Mammary epithelial cell (primary cell): ENCODE measurements at regions of chr6 and their contacts with region 1.

Region 1: GRCh38 chr6:21461844-21462518 is 131.6 kb upstream of the SOX4 start:
- DNase-seq: no peak
- H3K4me3 ChIP-seq: no peak overlapping the region
- H3K27ac ChIP-seq: no peak overlapping the region
- H3K4me1 ChIP-seq: no peaks in the 10 kb centered on the region
- H3K27me3 ChIP-seq: no peaks in the 10 kb centered on the region
- CTCF ChIP-seq: no peak

Region 2: DNA sequence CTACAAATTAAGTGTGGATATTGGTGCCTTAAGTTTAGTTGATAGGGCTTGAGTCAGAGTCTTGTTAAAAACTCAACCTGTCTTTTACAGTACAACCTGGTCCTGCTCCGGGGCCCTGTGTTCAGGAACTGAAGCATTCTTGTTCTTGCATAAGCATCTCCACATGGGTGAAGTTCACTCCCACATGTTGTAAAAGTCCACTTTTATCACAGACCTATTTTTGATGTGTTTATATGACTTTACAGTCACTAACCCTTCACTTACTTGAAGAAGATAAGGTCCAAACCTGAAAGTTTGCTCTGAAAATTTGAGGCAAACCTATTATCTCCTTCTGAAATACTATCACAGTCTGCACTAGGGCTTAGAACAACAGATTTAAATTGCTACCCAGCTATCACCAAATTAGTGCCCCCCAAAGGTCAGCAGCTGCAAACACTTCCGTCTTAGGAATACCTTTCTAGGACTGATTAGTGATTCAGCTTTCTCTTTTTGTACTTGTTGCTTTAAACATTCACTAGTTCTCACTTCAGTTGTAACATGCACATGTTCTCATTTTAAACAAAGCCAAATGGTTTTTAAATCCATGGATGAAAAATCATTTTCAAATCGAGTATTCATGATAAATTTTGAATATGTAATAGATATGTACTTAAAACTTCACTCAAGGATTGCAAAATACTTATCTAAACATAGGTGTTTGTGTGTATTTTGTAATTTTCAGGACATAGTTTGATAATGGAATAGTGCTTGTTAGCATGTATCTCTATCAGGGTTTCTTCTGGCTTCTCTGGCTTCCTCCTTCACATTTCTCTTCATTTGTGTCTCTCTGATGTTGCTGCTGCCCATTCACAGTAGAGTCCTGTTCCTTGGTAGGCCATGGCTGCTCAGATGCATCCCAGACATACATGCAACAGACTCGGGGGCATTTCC is 338.2 kb before region 1 on chr6:
- CTCF ChIA-PET with region 1: no interaction called
- dilution Hi-C with region 1: no loop called
- in situ Hi-C with region 1: no loop called
- intact Hi-C with region 1: no loop called
- DNase-seq: no peak
- H3K4me3 ChIP-seq: no peak overlapping the region
- H3K27ac ChIP-seq: no peak overlapping the region
- H3K4me1 ChIP-seq: no peaks in the 10 kb centered on the region
- H3K27me3 ChIP-seq: no peaks in the 10 kb centered on the region
- CTCF ChIP-seq: no peak

Region 3: GRCh38 chr6:21587179-21587924 is 125.4 kb after region 1 on chr6:
- CTCF ChIA-PET with region 1: interaction called, 18 read pairs
- dilution Hi-C with region 1: no loop called
- in situ Hi-C with region 1: no loop called
- intact Hi-C with region 1: no loop called
- DNase-seq: peak; percentile 73
- H3K4me3 ChIP-seq: peak overlapping the region; percentile 54 to 69 (median 62)
- H3K27ac ChIP-seq: peak overlapping the region; percentile 78
- H3K4me1 ChIP-seq: peaks cover 19% of the 10 kb centered on the region
- H3K27me3 ChIP-seq: no peaks in the 10 kb centered on the region
- CTCF ChIP-seq: peak in 1 of 2 donors; percentile 35